Cardiac septum (tissue), 1 donor: ENCODE measurements at regions of chr5 and their contacts with region 1.

Region 1: DNA sequence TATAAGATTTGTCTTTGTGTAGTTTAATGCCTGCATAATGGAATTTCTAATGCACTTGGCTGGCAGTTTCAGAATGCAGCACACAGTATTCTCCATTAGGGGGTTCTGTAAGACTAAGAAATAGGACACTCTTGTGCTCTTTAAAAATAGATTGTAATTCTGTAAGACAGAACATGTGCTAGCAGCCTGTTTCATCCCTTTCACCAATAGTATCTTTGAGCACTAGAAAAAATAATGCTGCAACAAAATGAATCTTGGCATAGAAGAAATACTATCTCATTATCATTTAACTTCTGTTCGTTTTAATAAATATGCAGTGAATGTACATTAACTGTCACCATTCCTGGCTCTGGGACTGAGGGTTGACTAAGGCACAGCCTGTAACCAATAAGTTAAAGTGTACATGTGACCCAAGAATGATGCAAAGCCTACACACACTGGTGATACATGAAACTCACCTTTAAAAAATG is 23.8 kb upstream of the ZNF622 start:
- DNase-seq: no peak

Region 2: DNA sequence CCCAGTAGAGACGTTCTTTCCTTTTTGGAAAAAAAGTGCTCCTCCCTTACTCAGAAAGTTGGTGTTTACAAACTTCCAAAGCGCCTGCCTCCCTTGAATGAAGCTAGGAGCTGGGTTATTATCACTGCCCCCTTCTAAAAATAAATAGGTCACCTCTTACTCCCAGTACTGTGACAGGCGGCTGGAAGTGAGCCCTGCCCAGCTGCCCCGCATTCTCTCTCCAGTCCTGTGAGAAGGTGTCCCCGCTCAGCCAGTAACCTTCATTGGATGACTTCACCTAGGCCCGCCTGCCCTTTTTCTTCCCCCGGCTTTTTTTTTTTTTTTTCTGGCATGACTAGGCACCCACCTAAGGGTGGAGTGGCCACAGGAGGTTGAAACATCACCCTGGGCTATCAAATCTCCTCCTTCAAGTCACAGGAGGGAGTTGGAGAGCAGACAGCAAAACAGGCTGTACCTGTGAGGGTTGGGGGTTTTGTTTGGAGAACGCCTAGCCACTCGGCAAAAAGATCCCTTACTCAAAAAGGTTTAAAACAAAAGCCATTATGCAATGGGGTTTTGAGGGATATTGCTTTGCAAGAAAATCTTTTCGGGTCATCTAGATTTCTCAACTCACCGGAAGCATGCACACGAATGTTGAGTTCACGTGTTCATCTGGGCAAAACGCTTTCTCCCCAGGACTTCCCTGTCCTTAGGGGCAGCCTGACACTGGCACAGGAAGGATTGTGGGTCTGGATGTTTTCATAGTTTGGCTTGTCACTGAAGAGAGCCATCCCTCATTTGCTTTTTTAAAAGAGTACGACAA is 19.6 kb after region 1 on chr5:
- intact Hi-C with region 1: loop called (anchors 1 kb)
- DNase-seq: peak; percentile 86

Region 3: GRCh38 chr5:16552666-16553343 is 63.4 kb after region 1 on chr5:
- intact Hi-C with region 1: loop called (anchors 2 kb)
- DNase-seq: peak; percentile 83

Region 4: GRCh38 chr5:16791036-16791705 is 301.8 kb after region 1 on chr5:
- intact Hi-C with region 1: loop called (anchors 10 kb)
- DNase-seq: no peak